BJ (cell line): ENCODE measurements at regions of chr10 and their contacts with region 1.

Region 1: DNA sequence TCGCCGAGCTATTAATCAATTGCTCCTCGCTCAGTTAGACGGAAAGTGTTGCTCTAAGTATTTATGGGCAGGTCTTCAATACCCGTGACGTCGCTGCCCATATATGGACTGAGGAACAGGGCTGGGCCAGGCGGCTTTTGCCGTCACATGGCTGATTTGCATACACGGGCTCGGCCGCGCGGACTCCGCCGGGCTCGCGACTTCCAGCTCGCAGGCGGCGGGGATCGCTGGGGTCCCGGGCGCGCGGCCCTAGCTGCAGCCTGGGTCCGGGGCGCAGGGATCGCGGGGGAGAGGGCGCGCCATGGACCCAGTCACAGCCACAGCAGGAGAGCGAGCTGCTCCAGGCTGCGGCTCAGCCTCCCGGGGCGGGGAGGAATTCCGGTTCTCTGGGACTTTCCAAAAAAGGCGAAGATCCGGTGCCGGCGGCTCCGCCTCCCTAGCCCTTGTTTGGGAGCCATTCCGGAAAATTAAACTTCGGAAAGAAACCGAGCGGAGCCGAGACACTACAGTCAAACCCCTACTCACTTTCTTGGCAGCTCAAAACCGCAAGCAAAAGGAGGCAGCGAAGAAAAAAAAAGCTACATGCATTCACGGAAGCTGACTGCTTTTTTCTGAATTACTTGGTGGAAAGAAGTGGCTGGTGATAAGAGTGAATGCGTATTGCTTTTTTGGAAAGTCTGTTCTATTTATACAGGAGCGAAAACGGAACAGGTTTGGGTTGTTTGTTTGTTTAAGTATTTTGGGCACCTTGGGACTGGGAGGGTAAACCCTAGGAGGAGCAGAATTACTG is at the start of gene EGR2:
- DNase-seq: peak; percentile 66
- H3K4me3 ChIP-seq: peak within 1 kb of the TSS; percentile 59
- H3K27me3 ChIP-seq: peaks cover 20% of the 10 kb centered on the region
- CTCF ChIP-seq: no peak
- polyA plus RNA-seq, gene EGR2: 1.1 and 1.9 TPM in 2 replicates

Region 2: GRCh38 chr10:61721431-61721830 is 1095.1 kb before region 1 on chr10:
- CTCF ChIA-PET with region 1: no interaction called
- POLR2A ChIA-PET with region 1: no interaction called
- DNase-seq: no peak
- H3K4me3 ChIP-seq: no peak overlapping the region
- H3K27me3 ChIP-seq: no peaks in the 10 kb centered on the region
- CTCF ChIP-seq: no peak

Region 3: GRCh38 chr10:62437696-62438095 is 378.8 kb before region 1 on chr10:
- CTCF ChIA-PET with region 1: interaction called, 24 read pairs
- POLR2A ChIA-PET with region 1: no interaction called
- DNase-seq: peak; percentile 89
- H3K4me3 ChIP-seq: no peak overlapping the region
- H3K27me3 ChIP-seq: no peaks in the 10 kb centered on the region
- CTCF ChIP-seq: peak; percentile 66

Region 4: DNA sequence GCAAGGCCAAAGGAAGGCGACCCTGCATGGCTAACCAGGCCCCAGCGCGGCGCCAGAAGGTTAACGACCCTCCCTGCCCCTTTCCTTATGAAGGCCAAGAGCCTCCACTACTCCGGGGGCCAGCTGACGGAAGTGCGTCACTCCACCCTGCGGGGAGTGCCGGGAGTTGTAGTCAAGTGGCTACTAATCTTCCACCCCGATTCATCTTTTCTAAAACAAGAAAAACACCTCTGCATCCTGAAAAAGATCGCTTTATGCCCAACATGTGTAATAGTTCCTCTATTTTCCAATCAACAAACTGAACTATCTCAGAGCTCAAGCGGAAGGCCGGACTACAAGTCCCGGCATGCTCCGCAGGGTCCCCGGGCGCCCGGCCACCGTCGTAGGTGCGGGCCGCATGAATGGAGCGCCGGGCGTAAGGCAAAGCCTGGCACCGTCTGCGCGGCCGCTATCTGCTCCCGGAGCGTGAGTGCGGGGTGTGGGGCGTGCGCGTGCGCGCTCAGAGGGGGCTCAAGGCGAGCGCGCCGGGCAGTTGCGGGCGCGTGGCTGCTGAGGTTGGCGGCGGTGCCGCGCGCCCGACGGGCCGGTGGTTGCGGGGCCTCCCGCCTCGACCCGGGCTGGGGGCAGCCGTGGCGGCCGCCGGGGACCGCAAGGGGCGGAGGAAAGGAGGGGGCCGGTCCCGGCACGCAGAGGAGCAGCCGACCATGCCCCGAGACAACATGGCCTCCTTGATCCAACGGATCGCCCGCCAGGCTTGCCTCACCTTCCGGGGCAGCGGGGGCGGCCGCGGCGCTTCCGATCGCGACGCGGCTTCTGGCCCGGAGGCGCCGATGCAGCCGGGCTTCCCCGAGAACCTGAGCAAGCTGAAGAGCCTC is 11.9 kb before region 1 on chr10 and contains the start of gene ADO:
- CTCF ChIA-PET with region 1: interaction called, 17 read pairs
- POLR2A ChIA-PET with region 1: no interaction called
- DNase-seq: no peak
- H3K4me3 ChIP-seq: peak within 1 kb of the TSS; percentile 91
- H3K27me3 ChIP-seq: peaks cover 2% of the 10 kb centered on the region; the same call in 1 of the 2 replicates
- CTCF ChIP-seq: no peak
- polyA plus RNA-seq, gene ADO: 7.8 and 15.3 TPM in 2 replicates

Region 5: DNA sequence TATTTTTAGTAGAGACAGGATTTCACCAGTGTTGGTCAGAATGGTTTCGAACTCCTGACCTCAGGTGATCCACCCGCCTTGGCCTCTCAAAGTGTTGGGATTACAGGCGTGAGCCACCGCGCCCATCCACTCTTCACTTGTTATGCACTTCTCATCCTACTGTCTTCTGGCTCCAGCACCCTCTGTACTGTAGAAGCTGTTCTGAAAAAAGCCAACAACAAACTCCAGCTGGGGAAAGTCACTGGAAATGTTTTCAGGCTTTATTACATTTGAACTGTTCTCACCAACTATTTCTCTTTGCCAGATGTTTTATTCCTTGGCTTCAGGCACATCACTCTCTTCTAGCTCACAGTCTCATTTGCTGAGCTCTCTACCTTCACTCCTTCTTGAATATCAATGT is 122.1 kb after region 1 on chr10:
- CTCF ChIA-PET with region 1: no interaction called
- POLR2A ChIA-PET with region 1: no interaction called
- DNase-seq: no peak
- H3K4me3 ChIP-seq: no peak overlapping the region
- H3K27me3 ChIP-seq: no peaks in the 10 kb centered on the region
- CTCF ChIP-seq: no peak